Endothelial cell of umbilical vein (primary cell): ENCODE measurements at regions of chr2 and their contacts with region 1.

Region 1: GRCh38 chr2:65186872-65187851 is 40.5 kb upstream of the ACTR2 start:
- DNase-seq: peak; percentile 90
- H3K4me3 ChIP-seq: no peak overlapping the region
- H3K27ac ChIP-seq: no peak overlapping the region
- H3K4me1 ChIP-seq: peaks cover 13% of the 10 kb centered on the region
- H3K27me3 ChIP-seq: peaks cover 4 to 6% of the 10 kb centered on the region in 2 experiments
- CTCF ChIP-seq: peak; percentile 87 to 90
- POLR2A ChIP-seq: no peak

Region 2: GRCh38 chr2:64914735-64915509 is 272.2 kb before region 1 on chr2:
- CTCF ChIA-PET with region 1: interaction called, 27 read pairs
- POLR2A ChIA-PET with region 1: no interaction called
- dilution Hi-C with region 1: no loop called
- intact Hi-C with region 1: loop called (anchors 1 kb)
- DNase-seq: no peak
- H3K4me3 ChIP-seq: no peak overlapping the region
- H3K27ac ChIP-seq: no peak overlapping the region
- H3K4me1 ChIP-seq: peaks cover 2% of the 10 kb centered on the region
- H3K27me3 ChIP-seq: peaks cover 2 to 4% of the 10 kb centered on the region in 2 experiments
- CTCF ChIP-seq: no peak
- POLR2A ChIP-seq: no peak

Region 3: DNA sequence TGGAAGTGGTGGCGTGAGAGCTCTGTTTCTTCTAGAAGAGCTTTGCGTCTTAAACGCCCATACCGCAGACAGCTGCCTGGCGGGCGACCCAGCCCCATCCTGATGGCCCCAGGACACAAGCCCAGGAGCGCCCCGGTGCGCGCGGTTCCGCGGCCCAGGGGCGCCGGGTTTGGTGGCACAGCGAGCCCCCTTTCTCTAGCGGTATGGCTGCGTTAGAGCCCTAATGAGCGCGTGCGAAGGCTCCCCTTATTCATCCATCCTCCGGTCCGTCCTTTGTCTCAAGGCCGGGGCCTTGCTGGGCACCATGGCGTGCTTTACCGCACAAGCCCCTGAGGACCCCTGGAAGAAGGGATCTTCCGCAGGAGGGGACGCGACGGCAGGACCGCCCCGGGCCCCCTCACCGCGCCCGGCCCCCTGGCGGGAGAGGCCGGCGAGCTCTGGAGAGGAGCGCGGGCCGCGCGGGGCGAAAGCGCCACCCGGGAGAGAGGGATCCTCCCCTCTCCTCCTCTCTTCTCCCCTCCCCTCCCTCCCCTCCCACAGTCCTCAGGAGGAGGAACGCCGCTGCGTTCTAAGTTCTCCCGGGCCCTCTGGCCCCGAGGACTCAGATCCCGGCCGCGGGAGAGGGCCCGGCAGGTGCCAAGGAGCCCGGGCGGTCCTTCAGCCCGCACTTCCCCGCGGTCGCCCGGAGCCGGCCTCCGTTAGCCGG is 198.6 kb before region 1 on chr2:
- CTCF ChIA-PET with region 1: no interaction called
- POLR2A ChIA-PET with region 1: no interaction called
- dilution Hi-C with region 1: no loop called
- intact Hi-C with region 1: loop called (anchors 5 kb)
- DNase-seq: peak; percentile 79
- H3K4me3 ChIP-seq: peak overlapping the region; percentile 54 to 69 (median 67)
- H3K27ac ChIP-seq: peak overlapping the region; percentile 94
- H3K4me1 ChIP-seq: peaks cover 15% of the 10 kb centered on the region
- H3K27me3 ChIP-seq: peaks cover 0 to 4% of the 10 kb centered on the region in 2 experiments
- CTCF ChIP-seq: peak in 1 of 2 donors; percentile 51
- POLR2A ChIP-seq: peak; percentile 73

Region 4: GRCh38 chr2:65064728-65065552 is 122.2 kb before region 1 on chr2:
- CTCF ChIA-PET with region 1: interaction called, 22 read pairs
- POLR2A ChIA-PET with region 1: no interaction called
- dilution Hi-C with region 1: no loop called
- intact Hi-C with region 1: loop called (anchors 1 kb)
- DNase-seq: peak; percentile 93
- H3K4me3 ChIP-seq: no peak overlapping the region
- H3K27ac ChIP-seq: peak overlapping the region; percentile 48
- H3K4me1 ChIP-seq: peaks cover 33% of the 10 kb centered on the region
- H3K27me3 ChIP-seq: no peaks in the 10 kb centered on the region
- CTCF ChIP-seq: peak; percentile 54 to 61
- POLR2A ChIP-seq: no peak

Region 5: GRCh38 chr2:65169760-65170136 is 17.4 kb before region 1 on chr2:
- CTCF ChIA-PET with region 1: interaction called, 26 read pairs
- POLR2A ChIA-PET with region 1: no interaction called
- dilution Hi-C with region 1: no loop called
- intact Hi-C with region 1: no loop called
- DNase-seq: no peak
- H3K4me3 ChIP-seq: no peak overlapping the region
- H3K27ac ChIP-seq: no peak overlapping the region
- H3K4me1 ChIP-seq: no peaks in the 10 kb centered on the region
- H3K27me3 ChIP-seq: peaks cover 0 to 4% of the 10 kb centered on the region in 2 experiments
- CTCF ChIP-seq: no peak
- POLR2A ChIP-seq: no peak